Body of pancreas (tissue), 4 donors: ENCODE measurements at regions of chr9 and their contacts with region 1.

Region 1: GRCh38 chr9:129500161-129500862 is 120.6 kb downstream of the C9orf50 start:
- DNase-seq: peak in 1 of 4 donors; percentile 16
- ATAC-seq: no peak
- H3K4me3 ChIP-seq: no peak overlapping the region
- H3K27ac ChIP-seq: peak overlapping the region in 3 of 4 donors; percentile 25 to 49 (median 48)
- H3K4me1 ChIP-seq: peaks cover 43% of the 10 kb centered on the region
- H3K27me3 ChIP-seq: no peaks in the 10 kb centered on the region
- CTCF ChIP-seq: no peak
- POLR2A ChIP-seq: no peak

Region 2: DNA sequence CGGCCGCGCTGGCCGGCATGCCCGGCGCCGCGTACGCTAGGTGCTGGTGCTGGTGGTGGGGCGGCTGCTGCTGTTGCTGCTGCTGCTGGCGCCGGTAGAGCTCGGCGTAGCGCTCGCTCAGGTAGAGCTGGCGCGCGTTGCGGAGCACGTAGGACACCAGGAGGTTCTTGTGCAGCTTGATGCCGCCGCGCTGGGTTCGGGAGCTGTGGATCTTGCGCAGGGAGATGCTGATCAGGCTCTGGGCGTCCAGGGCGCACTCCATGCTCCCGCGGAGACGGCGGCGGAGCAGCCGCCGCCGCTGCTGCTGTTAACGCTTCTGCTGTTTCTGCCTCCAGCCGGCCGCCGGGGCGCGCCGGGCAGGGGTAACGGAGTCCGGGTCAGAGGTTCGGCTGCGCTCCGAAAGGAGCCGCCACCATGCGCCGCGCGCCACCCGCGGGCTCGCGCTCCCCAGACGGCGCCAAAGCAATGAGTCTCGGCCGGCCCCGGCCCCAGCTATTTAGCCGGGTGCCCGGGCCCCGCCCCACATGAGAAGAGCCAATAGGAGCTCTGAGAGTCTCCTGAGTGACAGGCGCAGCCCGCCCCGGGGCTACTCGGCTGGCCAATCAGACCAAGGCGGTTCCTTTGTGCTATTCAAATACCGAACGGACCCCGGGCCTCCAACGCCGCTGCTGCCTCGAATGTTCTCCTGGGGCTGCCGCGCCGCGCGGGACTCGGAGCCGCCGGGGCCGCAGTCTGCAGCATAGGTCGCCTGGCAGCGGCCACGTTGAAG is 322.3 kb before region 1 on chr9 and contains the start of gene IER5L:
- intact Hi-C with region 1: loop called (anchors 10 kb)
- DNase-seq: peak; percentile 95 to 97 (median 97)
- ATAC-seq: peak; percentile 80
- H3K4me3 ChIP-seq: peak within 1 kb of the TSS; percentile 77 to 79
- H3K27ac ChIP-seq: peak within 1 kb of the TSS; percentile 68 to 98 (median 95)
- H3K4me1 ChIP-seq: peaks cover 44% of the 10 kb centered on the region
- H3K27me3 ChIP-seq: no peaks in the 10 kb centered on the region
- CTCF ChIP-seq: peak in 1 of 7 experiments; percentile 8
- POLR2A ChIP-seq: peak; percentile 92 to 97 (median 97)
- total RNA-seq, gene IER5L: 3.0 to 4.4 TPM

Region 3: GRCh38 chr9:129569502-129570449 is 69.5 kb after region 1 on chr9:
- intact Hi-C with region 1: loop called (anchors 10 kb)
- DNase-seq: peak; percentile 49 to 66 (median 64)
- ATAC-seq: peak; percentile 62
- H3K4me3 ChIP-seq: no peak overlapping the region
- H3K27ac ChIP-seq: peak overlapping the region; percentile 67 to 89 (median 86)
- H3K4me1 ChIP-seq: peaks cover 40% of the 10 kb centered on the region
- H3K27me3 ChIP-seq: no peaks in the 10 kb centered on the region
- CTCF ChIP-seq: peak; percentile 9 to 76 (median 65)
- POLR2A ChIP-seq: peak in 1 of 3 donors; percentile 20

Region 4: DNA sequence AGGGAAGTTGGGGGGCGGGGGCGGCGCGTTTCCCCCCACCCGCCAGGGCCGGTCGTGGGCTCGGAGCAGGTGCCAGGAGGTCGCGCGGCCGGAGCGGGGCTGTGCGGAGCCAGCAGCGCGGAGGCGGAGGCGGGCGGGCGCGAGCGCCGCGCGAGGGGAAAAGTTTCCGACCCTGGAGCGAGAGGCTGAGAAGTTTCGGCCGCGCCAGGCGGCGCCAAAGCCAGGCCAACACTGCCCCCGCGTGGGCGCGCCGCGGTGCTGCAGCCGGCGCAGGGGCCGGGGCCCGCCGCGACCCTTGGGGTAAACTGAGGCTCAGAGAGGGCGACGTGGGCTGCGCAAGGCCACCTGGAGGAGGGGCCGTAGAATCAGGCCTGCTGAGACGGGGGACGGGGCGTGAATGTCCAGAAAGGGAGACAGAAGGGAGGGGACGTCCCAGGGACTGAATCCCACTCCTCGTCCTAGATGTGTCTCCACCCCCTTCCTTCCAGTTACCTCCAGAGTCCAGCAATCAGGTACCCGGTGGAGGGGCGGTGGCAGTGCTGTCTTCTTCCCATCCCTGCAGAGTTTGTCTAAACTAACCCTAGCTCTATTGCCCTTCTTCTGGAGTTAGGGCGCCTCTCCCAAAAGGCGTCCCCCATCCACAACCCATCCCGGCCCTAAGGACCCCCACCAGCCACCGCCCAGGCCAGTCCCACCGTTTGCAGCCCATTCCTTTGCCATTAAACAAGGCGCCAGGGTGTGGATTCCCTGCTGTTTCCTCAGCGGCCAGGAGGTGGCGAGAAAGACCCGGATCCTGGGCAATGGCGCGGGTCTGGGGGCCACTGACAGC is 110.4 kb after region 1 on chr9:
- intact Hi-C with region 1: loop called (anchors 10 kb)
- DNase-seq: peak; percentile 78 to 84 (median 82)
- ATAC-seq: peak; percentile 69
- H3K4me3 ChIP-seq: peak overlapping the region; percentile 20 to 54
- H3K27ac ChIP-seq: peak overlapping the region; percentile 69 to 88 (median 83)
- H3K4me1 ChIP-seq: peaks cover 29% of the 10 kb centered on the region
- H3K27me3 ChIP-seq: no peaks in the 10 kb centered on the region
- CTCF ChIP-seq: peak; percentile 58 to 99 (median 82)
- POLR2A ChIP-seq: peak in 1 of 3 donors; percentile 34